ENCODE measurements at regions of chr4 and their contacts with region 1.

Region 1: DNA sequence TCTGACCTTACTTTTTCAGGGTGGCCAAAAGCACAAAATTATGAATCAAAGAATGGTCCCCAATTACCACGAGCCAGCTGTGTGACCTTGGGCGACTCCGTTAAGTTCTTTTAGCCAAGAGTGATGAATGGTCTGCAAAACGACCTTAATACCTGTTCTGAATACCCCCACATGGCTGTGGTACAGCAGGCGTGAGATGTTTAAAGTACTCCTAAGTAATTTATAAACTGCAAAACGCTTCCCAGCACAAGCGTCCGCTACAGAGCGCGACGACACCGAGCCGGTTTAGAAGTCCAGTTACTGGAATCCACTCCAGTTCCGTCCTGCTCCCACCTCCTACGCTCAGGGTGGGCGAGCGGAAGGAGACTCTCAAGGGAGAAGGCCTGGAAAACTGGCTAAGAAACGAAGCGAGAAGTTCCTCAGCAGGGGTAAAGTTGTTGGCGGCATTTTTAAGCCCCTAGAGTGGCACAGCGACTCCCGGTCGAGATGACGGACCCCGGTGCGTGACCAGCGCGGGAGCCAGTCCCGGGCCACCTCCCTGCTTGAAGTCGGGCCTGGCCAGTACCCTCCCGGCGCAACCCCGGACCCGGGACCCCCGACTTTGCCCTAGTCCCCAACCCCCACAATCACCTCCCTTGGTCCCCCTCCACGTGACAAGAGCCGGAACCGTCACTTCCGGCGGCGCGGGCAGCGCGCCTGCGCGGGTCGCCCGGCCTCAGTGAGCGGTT is 683 bp upstream of the BMP2K start:
- DNase-seq: peak; percentile 91
- ATAC-seq: peak; percentile 75
- H3K4me3 Mint-ChIP-seq: peak overlapping the region; percentile 84
- H3K27ac Mint-ChIP-seq: peak overlapping the region; percentile 96
- H3K4me1 Mint-ChIP-seq: peaks cover 17% of the 10 kb centered on the region
- H3K27me3 Mint-ChIP-seq: no peaks in the 10 kb centered on the region

Region 2: GRCh38 chr4:77593993-77594392 is 1181.5 kb before region 1 on chr4:
- CTCF ChIA-PET with region 1: no interaction called
- POLR2A ChIA-PET with region 1: no interaction called
- intact Hi-C with region 1: loop called in 1 of 2 experiments (anchors 5 kb)
- DNase-seq: no peak
- ATAC-seq: no peak
- H3K4me3 Mint-ChIP-seq: no peak overlapping the region
- H3K27ac Mint-ChIP-seq: peak overlapping the region; percentile 92
- H3K4me1 Mint-ChIP-seq: peaks cover 59% of the 10 kb centered on the region
- H3K27me3 Mint-ChIP-seq: peaks cover 9% of the 10 kb centered on the region

Region 3: DNA sequence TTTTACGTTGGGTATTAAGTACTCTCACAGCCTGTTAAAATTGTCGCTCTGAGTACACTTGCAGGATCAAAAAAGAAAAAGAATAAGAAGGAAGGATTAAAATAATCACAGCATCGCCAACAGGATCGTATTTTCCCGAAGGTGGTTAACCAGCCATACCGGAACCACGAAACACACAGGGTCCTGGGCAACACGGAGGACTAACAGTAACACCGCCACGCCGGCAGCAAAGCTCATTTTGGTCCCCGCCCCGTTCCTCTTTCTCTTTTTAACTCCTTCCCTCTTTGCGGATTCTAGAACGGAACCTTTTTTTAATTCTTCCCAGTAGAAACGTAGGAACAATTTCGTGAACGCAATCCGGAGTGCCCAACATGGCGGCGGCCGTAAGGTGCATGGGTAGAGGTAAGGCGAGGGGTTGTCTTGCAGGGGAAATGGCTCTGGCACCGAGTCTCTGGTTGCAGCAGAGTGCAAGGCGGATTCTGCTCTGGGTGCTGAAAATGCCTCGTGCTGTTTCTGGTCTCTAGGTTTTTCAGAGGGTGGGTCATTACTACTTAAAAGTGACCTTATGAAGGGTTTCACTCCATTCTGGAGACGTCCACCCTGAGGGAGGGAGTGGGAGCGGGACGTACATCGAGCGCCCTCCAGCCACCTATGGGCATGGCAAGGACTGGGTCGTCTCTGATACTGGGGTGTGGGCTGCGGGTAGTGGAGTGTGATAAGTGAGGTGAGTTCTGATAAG is 912.8 kb before region 1 on chr4 and contains the start of gene MRPL1:
- CTCF ChIA-PET with region 1: no interaction called
- POLR2A ChIA-PET with region 1: no interaction called
- intact Hi-C with region 1: loop called (anchors 2 to 5 kb)
- DNase-seq: peak; percentile 92
- ATAC-seq: peak; percentile 78
- H3K4me3 Mint-ChIP-seq: peak within 1 kb of the TSS; percentile 98
- H3K27ac Mint-ChIP-seq: peak within 1 kb of the TSS; percentile 100
- H3K4me1 Mint-ChIP-seq: peaks cover 61% of the 10 kb centered on the region
- H3K27me3 Mint-ChIP-seq: peaks cover 2% of the 10 kb centered on the region
- total RNA-seq, gene MRPL1: 61.1 to 70.6 TPM

Region 4: GRCh38 chr4:78439328-78439727 is 336.1 kb before region 1 on chr4:
- CTCF ChIA-PET with region 1: no interaction called
- POLR2A ChIA-PET with region 1: no interaction called
- intact Hi-C with region 1: no loop called
- DNase-seq: no peak
- ATAC-seq: no peak
- H3K4me3 Mint-ChIP-seq: no peak overlapping the region
- H3K27ac Mint-ChIP-seq: no peak overlapping the region
- H3K4me1 Mint-ChIP-seq: no peaks in the 10 kb centered on the region
- H3K27me3 Mint-ChIP-seq: no peaks in the 10 kb centered on the region

Region 5: DNA sequence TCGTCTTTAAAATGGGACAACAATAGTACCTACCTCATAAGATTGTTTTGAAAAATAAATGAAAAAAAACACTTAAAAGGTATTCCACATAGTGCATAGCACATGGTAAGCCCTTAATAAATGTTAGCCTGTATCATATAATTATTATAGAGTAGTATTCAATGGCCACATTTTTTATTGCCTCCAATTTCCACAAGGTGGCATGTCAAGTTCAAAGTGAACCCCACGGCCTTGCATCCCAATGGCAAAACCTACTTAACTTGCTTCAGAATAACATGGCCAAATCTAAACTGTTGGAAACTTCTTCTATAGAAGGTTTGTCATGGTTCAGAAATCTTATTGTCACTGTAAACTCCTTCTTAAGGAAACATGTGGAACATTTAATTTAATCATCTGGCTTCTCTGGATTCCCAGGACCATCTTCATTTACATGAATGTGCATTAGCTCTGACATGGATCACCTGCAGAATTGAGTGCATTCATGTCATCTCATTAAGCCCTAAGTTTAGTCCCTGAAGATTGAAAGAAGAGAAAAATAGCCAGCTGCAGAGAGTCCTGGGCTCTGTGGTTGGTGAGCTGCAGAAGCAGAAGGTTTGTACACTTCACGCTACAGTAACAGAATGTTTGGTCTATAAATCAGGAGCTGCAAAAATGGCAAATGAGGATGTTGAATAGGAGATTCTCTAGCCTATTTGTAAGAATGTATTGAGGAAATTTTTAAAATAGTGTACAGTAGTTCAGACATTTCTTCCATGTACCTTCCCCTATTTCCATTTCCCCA is 162.9 kb before region 1 on chr4:
- CTCF ChIA-PET with region 1: interaction called, 4 read pairs
- POLR2A ChIA-PET with region 1: no interaction called
- intact Hi-C with region 1: loop called in 1 of 2 experiments (anchors 2 kb)
- DNase-seq: peak; percentile 32
- ATAC-seq: peak; percentile 34
- H3K4me3 Mint-ChIP-seq: no peak overlapping the region
- H3K27ac Mint-ChIP-seq: no peak overlapping the region
- H3K4me1 Mint-ChIP-seq: peaks cover 34% of the 10 kb centered on the region
- H3K27me3 Mint-ChIP-seq: no peaks in the 10 kb centered on the region

Region 6: GRCh38 chr4:78661921-78662521 is 113.4 kb before region 1 on chr4:
- CTCF ChIA-PET with region 1: no interaction called
- POLR2A ChIA-PET with region 1: no interaction called
- intact Hi-C with region 1: loop called (anchors 1 to 2 kb)
- DNase-seq: peak; percentile 15
- ATAC-seq: peak; percentile 21
- H3K4me3 Mint-ChIP-seq: no peak overlapping the region
- H3K27ac Mint-ChIP-seq: no peak overlapping the region
- H3K4me1 Mint-ChIP-seq: peaks cover 35% of the 10 kb centered on the region
- H3K27me3 Mint-ChIP-seq: no peaks in the 10 kb centered on the region

Region 7: DNA sequence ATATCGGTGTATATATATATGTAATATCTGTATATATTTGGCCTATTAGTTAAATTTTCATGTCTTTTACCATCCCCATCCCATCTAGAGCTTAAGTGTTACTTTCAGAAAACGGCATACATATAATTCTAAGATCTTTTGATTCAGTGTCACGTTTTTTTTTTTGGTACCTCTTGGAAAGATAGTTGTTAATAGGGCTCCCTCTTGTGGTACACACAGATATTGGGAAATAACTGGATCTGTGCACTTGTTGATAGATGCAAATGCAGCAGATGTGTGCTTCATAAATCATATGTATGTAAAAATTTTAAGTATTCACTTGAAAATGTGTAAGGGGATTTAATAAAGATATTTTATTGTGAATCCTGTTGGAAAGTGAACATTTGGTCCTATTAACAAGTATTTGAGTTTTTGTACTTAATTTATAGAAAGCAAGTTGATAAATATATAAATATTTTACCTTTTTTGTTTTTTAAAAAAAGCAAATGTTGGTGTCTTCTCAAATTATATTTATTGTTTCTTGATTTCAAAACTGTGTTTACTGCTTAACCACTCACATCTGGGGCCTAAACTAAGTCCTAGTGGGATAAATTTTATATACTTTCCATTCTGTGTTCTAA is 89.0 kb after region 1 on chr4:
- CTCF ChIA-PET with region 1: no interaction called
- POLR2A ChIA-PET with region 1: no interaction called
- intact Hi-C with region 1: loop called in 1 of 2 experiments (anchors 2 kb)
- DNase-seq: no peak
- ATAC-seq: peak; percentile 33
- H3K4me3 Mint-ChIP-seq: no peak overlapping the region
- H3K27ac Mint-ChIP-seq: no peak overlapping the region
- H3K4me1 Mint-ChIP-seq: peaks cover 7% of the 10 kb centered on the region
- H3K27me3 Mint-ChIP-seq: no peaks in the 10 kb centered on the region

Region 8: DNA sequence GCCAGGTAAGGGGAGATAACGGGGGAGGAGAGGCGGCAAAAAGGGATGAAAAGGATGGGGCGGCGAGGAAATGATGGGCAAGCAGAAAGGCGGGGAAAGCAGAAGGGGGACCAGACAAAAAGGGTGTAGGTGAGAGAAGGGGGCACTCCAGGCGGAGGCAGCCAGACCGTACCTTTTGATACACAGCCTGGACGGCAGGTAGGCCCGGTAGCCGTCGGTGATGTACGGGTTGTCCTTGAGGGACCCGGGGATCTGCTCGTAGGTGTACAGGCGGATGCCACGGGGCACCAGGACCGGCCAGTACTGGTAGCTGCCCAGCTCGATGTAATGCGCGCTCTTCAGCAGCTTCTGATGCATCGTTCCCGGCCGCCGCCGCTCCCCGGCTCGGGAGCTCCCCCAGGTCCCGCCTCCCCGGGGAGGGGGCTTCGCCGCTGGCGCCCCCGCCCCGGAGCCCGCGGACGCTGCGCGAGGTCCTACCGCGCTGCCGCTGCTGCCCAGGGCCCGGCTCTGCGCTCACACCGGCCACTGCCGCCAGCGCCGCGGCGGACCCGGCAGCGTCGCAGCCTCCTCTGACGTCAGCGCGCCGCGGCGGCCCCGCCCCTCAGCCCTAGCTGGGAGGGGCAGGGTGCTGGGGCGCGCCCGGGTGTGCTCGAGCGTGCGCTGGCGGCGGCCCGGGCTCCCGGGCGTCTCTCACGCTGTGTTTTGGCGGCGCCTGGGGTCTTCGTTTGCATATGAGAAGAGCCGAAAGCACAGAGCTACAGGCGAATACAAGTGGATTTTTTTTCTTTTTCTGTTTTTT is 163.6 kb after region 1 on chr4 and contains the start of gene PAQR3:
- CTCF ChIA-PET with region 1: interaction called, 3 read pairs
- POLR2A ChIA-PET with region 1: interaction called, 3 read pairs
- intact Hi-C with region 1: loop called (anchors 1 to 2 kb)
- DNase-seq: peak; percentile 91
- ATAC-seq: peak; percentile 95
- H3K4me3 Mint-ChIP-seq: peak within 1 kb of the TSS; percentile 88
- H3K27ac Mint-ChIP-seq: peak within 1 kb of the TSS; percentile 83
- H3K4me1 Mint-ChIP-seq: peaks cover 30% of the 10 kb centered on the region
- H3K27me3 Mint-ChIP-seq: peaks cover 8% of the 10 kb centered on the region
- total RNA-seq, gene PAQR3: 7.8 to 8.8 TPM

Region 9: DNA sequence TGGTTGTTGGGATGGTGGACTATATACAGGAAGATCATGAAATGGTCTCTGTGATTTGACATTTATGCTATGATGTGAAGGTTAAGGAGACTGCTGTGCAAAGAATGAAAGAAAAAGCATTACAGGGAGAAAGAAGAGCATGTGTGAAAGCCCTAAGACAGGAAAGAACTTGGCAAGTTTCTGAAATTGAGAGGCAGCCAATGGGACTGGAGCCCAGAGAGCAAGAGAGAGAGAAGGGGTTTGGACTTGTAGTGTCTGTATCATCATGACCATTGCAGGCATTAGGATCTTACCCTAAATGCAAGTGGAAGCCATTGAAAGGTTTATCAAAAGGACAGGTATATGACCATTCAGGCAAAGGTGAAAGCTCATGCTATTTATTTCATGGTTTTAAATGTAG is 403.3 kb after region 1 on chr4:
- CTCF ChIA-PET with region 1: no interaction called
- POLR2A ChIA-PET with region 1: no interaction called
- intact Hi-C with region 1: no loop called
- DNase-seq: no peak
- ATAC-seq: no peak
- H3K4me3 Mint-ChIP-seq: no peak overlapping the region
- H3K27ac Mint-ChIP-seq: no peak overlapping the region
- H3K4me1 Mint-ChIP-seq: no peaks in the 10 kb centered on the region
- H3K27me3 Mint-ChIP-seq: no peaks in the 10 kb centered on the region

Measured in activated CD4-positive, alpha-beta T cell treated with anti-CD3 and anti-CD28 coated beads for 36 hours (primary cell).